ENCODE measurements at regions of chr4 and their contacts with region 1.

Region 1: GRCh38 chr4:124275-125081 is at the start of gene ZNF718:
- DNase-seq: peak; percentile 97 to 99 (median 97)
- H3K4me3 ChIP-seq: peak within 1 kb of the TSS; percentile 79 to 90 (median 88)
- H3K27ac ChIP-seq: peak within 1 kb of the TSS; percentile 72 to 92
- H3K4me1 ChIP-seq: peaks cover 23 to 54% (median 40%) of the 10 kb centered on the region in 4 experiments
- H3K27me3 ChIP-seq: no peaks in the 10 kb centered on the region

Region 2: DNA sequence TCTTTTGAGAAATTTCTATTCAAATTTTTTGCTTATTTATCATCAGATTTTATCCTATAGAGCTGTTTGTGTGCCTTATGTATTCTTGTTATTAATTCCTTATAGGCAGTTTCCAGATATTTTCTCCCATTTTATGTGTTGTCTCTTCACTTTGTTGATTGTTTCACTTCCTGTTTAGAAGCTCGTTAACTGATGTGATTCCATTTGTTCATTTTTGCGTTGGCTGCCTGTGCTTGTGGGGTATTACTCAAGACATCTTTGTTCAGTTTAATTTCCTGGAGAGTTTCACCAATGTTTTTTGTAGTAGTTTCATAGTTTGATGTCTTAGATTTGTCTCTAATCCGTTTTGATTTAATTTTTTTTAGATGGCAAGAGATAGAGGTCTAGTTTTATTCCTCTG is 14.5 kb after region 1 on chr4:
- CTCF ChIA-PET with region 1: interaction called, 15 read pairs
- POLR2A ChIA-PET with region 1: no interaction called
- DNase-seq: no peak
- H3K4me3 ChIP-seq: no peak overlapping the region
- H3K27ac ChIP-seq: no peak overlapping the region
- H3K4me1 ChIP-seq: no peaks in the 10 kb centered on the region
- H3K27me3 ChIP-seq: no peaks in the 10 kb centered on the region

Region 3: DNA sequence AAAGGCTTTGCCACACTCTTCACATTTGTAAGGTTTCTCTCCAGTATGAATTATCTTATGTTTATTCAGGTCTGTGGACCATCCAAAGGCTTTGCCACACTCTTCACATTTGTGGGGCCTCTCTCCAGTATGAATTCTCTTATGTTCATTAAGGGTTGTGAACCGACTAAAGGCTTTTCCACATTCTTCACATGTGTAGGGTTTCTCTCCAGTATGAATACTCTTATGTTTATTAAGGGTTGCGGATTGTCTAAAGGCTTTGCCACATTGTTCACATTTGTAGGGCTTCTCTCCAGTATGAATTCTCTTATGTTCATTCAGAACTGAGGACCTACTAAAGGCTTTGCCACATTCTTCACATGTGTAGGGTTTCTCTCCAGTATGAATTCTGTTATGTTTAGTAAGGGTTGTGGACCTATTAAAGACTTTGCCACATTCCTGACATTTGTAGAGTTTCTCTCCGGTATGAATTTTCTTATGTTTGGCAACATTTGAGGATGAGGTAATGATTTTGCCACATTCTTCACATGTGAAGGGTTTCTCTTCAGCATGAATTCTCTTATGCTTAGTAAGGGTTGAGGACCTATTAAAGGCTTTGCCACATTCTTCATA is 147.1 kb after region 1 on chr4:
- CTCF ChIA-PET with region 1: no interaction called
- POLR2A ChIA-PET with region 1: no interaction called
- DNase-seq: no peak
- H3K4me3 ChIP-seq: no peak overlapping the region
- H3K27ac ChIP-seq: no peak overlapping the region
- H3K4me1 ChIP-seq: no peaks in the 10 kb centered on the region
- H3K27me3 ChIP-seq: no peaks in the 10 kb centered on the region